A673 (cell line): ENCODE measurements at regions of chr6 and their contacts with region 1.

Region 1: GRCh38 chr6:134174672-134175198 is 122.3 kb upstream of the SLC2A12 start:
- DNase-seq: peak; percentile 93
- H3K4me3 ChIP-seq: peak overlapping the region; percentile 76
- H3K27ac ChIP-seq: peak overlapping the region; percentile 91
- H3K4me1 ChIP-seq: peaks cover 23% of the 10 kb centered on the region
- H3K27me3 ChIP-seq: no peaks in the 10 kb centered on the region
- CTCF ChIP-seq: no peak

Region 2: DNA sequence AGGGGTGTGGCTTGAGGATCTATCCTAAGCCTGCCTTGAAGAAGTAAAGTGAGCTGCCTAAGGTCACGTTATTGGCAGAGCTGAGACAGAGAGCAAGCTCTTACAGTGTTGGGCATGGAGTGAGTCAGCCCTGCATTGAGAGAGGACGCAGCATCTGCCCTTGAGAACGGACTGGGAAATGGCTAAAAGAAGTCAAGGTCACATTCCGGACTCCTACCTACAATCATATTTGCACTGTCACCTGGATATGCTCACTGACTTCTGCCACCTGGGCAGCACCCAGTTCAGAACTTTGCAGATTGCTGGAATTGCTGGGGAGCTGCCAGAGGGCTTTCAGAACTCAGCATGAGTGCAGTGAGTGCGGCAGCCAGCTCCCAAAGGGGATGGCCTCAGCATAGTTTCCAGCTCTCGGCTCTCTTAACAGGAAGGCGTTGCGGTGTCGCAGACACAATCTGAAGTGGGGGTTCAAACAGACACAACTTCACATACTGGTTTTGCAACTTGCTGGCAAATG is 342.5 kb after region 1 on chr6:
- CTCF ChIA-PET with region 1: no interaction called
- POLR2A ChIA-PET with region 1: no interaction called
- intact Hi-C with region 1: loop called (anchors 5 kb)
- DNase-seq: peak; percentile 91
- H3K4me3 ChIP-seq: peak overlapping the region; percentile 27
- H3K27ac ChIP-seq: peak overlapping the region; percentile 74
- H3K4me1 ChIP-seq: peaks cover 78% of the 10 kb centered on the region
- H3K27me3 ChIP-seq: no peaks in the 10 kb centered on the region
- CTCF ChIP-seq: no peak

Region 3: DNA sequence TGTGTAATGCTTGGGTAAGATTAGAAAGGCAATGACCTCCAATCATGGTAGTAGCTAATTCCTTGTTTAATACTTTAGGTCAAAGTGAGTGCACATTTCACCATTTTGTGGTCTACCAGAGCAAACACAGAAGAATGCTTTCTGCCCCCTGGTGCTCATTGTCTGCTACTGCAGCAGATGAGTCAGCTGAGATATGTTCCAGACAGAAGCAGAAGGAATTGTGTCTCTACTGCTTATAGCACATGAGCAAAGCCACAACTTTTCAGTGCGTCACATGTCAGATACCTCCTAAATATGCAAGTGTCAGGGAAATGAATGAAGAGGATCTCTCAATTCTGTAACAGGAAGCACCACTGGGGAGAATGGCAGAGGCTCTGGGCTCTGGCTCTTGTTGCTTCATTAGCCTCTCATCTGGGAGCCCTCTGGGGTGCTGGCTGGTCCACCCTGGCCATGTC is 466.3 kb after region 1 on chr6:
- CTCF ChIA-PET with region 1: interaction called, 12 read pairs
- POLR2A ChIA-PET with region 1: no interaction called
- intact Hi-C with region 1: loop called (anchors 1 kb)
- DNase-seq: peak; percentile 94
- H3K4me3 ChIP-seq: no peak overlapping the region
- H3K27ac ChIP-seq: peak overlapping the region; percentile 7
- H3K4me1 ChIP-seq: peaks cover 26% of the 10 kb centered on the region
- H3K27me3 ChIP-seq: no peaks in the 10 kb centered on the region
- CTCF ChIP-seq: peak; percentile 95

Region 4: GRCh38 chr6:134678436-134678889 is 503.7 kb after region 1 on chr6:
- CTCF ChIA-PET with region 1: interaction called, 4 read pairs
- POLR2A ChIA-PET with region 1: no interaction called
- intact Hi-C with region 1: loop called (anchors 10 kb)
- DNase-seq: peak; percentile 87
- H3K4me3 ChIP-seq: no peak overlapping the region
- H3K27ac ChIP-seq: no peak overlapping the region
- H3K4me1 ChIP-seq: peaks cover 57% of the 10 kb centered on the region
- H3K27me3 ChIP-seq: no peaks in the 10 kb centered on the region
- CTCF ChIP-seq: no peak

Region 5: GRCh38 chr6:134882426-134883038 is 707.8 kb after region 1 on chr6:
- CTCF ChIA-PET with region 1: interaction called, 5 read pairs
- POLR2A ChIA-PET with region 1: no interaction called
- intact Hi-C with region 1: loop called (anchors 1 kb)
- DNase-seq: peak; percentile 82
- H3K4me3 ChIP-seq: no peak overlapping the region
- H3K27ac ChIP-seq: no peak overlapping the region
- H3K4me1 ChIP-seq: peaks cover 9% of the 10 kb centered on the region
- H3K27me3 ChIP-seq: no peaks in the 10 kb centered on the region
- CTCF ChIP-seq: peak; percentile 96

Region 6: GRCh38 chr6:134938896-134939295 is 764.2 kb after region 1 on chr6:
- CTCF ChIA-PET with region 1: interaction called, 4 read pairs
- POLR2A ChIA-PET with region 1: no interaction called
- intact Hi-C with region 1: loop called (anchors 5 kb)
- DNase-seq: peak; percentile 6
- H3K4me3 ChIP-seq: no peak overlapping the region
- H3K27ac ChIP-seq: no peak overlapping the region
- H3K4me1 ChIP-seq: no peaks in the 10 kb centered on the region
- H3K27me3 ChIP-seq: no peaks in the 10 kb centered on the region
- CTCF ChIP-seq: no peak